Psoas muscle (tissue), 8 donors: ENCODE measurements at regions of chr12 and their contacts with region 1.

Region 1: GRCh38 chr12:60529723-60530122 is 933.9 kb downstream of the SLC16A7 start:
- DNase-seq: no peak
- ATAC-seq: no peak
- H3K4me3 ChIP-seq: no peak overlapping the region
- H3K27ac ChIP-seq: no peak overlapping the region
- H3K4me1 ChIP-seq: no peaks in the 10 kb centered on the region
- H3K27me3 ChIP-seq: no peaks in the 10 kb centered on the region
- CTCF ChIP-seq: no peak

Region 2: GRCh38 chr12:60577607-60578006 is 47.9 kb after region 1 on chr12:
- intact Hi-C with region 1: no loop called
- DNase-seq: no peak
- ATAC-seq: no peak
- H3K4me3 ChIP-seq: no peak overlapping the region
- H3K27ac ChIP-seq: no peak overlapping the region
- H3K4me1 ChIP-seq: no peaks in the 10 kb centered on the region
- H3K27me3 ChIP-seq: no peaks in the 10 kb centered on the region
- CTCF ChIP-seq: no peak

Region 3: DNA sequence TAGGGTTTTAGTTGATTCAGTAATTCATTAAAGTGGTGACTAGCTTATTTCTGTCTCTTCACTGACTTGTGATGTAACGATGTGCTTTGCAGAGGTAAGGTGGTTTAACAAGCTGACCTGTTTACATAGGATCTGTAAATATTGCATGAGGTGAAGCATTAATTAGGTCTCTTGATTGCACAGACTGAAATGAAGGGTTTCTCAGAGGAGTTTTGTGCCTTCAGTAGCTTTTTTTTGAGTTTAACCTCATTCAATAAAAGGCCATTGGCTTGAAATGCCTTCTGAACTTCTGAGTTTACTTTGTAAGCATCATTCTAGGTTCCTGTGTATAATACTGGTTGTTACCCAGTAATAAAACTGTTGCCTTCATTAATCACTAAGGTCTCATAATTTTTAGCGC is 130.5 kb after region 1 on chr12:
- intact Hi-C with region 1: no loop called
- DNase-seq: no peak
- ATAC-seq: no peak
- H3K4me3 ChIP-seq: no peak overlapping the region
- H3K27ac ChIP-seq: no peak overlapping the region
- H3K4me1 ChIP-seq: no peaks in the 10 kb centered on the region
- H3K27me3 ChIP-seq: no peaks in the 10 kb centered on the region
- CTCF ChIP-seq: no peak

Region 4: DNA sequence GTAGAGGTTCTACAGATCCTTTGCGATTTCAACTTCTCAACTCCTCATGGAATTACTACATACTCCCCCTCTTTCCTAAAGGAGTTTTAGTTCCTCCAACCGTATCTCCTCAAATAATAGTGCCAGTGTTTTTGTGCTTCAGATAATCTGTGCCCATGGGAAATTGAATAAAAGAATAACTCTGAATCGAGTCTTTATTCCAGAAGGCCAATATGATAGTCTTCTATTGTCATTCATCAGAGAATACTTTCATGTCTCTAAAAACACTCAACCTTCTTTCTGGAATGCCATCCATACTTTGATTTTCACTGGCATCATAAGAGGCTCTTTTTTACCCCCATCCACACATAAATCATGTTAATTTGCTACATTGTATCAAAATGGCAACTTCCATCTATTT is 819.1 kb after region 1 on chr12:
- intact Hi-C with region 1: loop called in 1 of 2 experiments (anchors 5 kb)
- DNase-seq: no peak
- ATAC-seq: no peak
- H3K4me3 ChIP-seq: no peak overlapping the region
- H3K27ac ChIP-seq: no peak overlapping the region
- H3K4me1 ChIP-seq: no peaks in the 10 kb centered on the region
- H3K27me3 ChIP-seq: no peaks in the 10 kb centered on the region
- CTCF ChIP-seq: no peak